ENCODE measurements at regions of chr2 and their contacts with region 1.

Region 1: GRCh38 chr2:121736462-121737341 is at the start of gene NIFK:
- DNase-seq: peak; percentile 100
- H3K4me3 Mint-ChIP-seq: peak within 1 kb of the TSS; percentile 90
- H3K27ac Mint-ChIP-seq: peak within 1 kb of the TSS; percentile 93
- H3K4me1 Mint-ChIP-seq: peaks cover 23% of the 10 kb centered on the region
- H3K27me3 Mint-ChIP-seq: no peaks in the 10 kb centered on the region
- total RNA-seq, gene NIFK: 164 and 177 TPM in 2 replicates

Region 2: GRCh38 chr2:121755236-121756111 is 18.8 kb after region 1 on chr2 and contains the start of gene TSN:
- intact Hi-C with region 1: loop called (anchors 1 kb)
- DNase-seq: peak; percentile 99
- H3K4me3 Mint-ChIP-seq: peak within 1 kb of the TSS; percentile 96
- H3K27ac Mint-ChIP-seq: peak within 1 kb of the TSS; percentile 93
- H3K4me1 Mint-ChIP-seq: peaks cover 25% of the 10 kb centered on the region
- H3K27me3 Mint-ChIP-seq: no peaks in the 10 kb centered on the region
- total RNA-seq, gene TSN: 72.6 and 76.5 TPM in 2 replicates

Measured in activated CD4-positive, alpha-beta T cell treated with anti-CD3 and anti-CD28 coated beads, Interleukin-2, amount 10 ng/mL, durations not matched to agents 24 days and 14 days (primary cell).